ENCODE measurements at regions of chr12 and their contacts with region 1.

Region 1: GRCh38 chr12:38465020-38465419 is 148.4 kb downstream of the ALG10B start:
- DNase-seq: no peak
- H3K4me3 ChIP-seq: no peak overlapping the region
- H3K27ac ChIP-seq: no peak overlapping the region
- H3K4me1 ChIP-seq: no peaks in the 10 kb centered on the region
- H3K27me3 ChIP-seq: no peaks in the 10 kb centered on the region
- CTCF ChIP-seq: no peak
- POLR2A ChIP-seq: no peak

Region 2: DNA sequence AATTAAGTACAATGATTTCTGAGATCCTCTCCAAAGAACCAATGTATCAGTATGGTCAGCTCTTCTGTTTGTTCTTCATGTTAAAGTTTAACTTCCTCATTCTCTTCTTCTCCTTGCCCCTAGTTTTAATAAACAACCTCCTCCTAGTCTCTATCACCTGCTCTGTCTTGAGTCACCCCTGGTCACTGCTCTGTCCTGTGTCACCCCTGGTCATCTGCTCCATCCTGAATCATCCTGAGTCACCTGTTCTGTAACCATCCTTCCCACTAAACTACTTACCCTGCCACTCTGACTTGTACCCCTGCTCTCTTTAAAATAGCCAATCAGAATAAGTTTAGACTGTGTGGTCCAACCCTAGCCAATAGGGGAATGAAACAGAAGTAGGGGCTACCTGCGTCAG is 47.9 kb before region 1 on chr12:
- intact Hi-C with region 1: loop called (anchors 2 kb)
- DNase-seq: no peak
- H3K4me3 ChIP-seq: no peak overlapping the region
- H3K27ac ChIP-seq: no peak overlapping the region
- H3K4me1 ChIP-seq: no peaks in the 10 kb centered on the region
- H3K27me3 ChIP-seq: no peaks in the 10 kb centered on the region
- CTCF ChIP-seq: no peak
- POLR2A ChIP-seq: no peak